CD14-positive monocyte (primary cell): ENCODE measurements at regions of chr3 and their contacts with region 1.

Region 1: GRCh38 chr3:15332405-15333098 is at the start of gene SH3BP5:
- DNase-seq: peak; percentile 65 to 72 (median 70)
- H3K4me3 ChIP-seq: peak within 1 kb of the TSS; percentile 78 to 84 (median 82)
- H3K4me3 Mint-ChIP-seq: peak within 1 kb of the TSS; percentile 97
- H3K27ac ChIP-seq: peak within 1 kb of the TSS; percentile 40 to 86
- H3K27ac Mint-ChIP-seq: peak within 1 kb of the TSS; percentile 79 to 94 (median 89)
- H3K4me1 ChIP-seq: peaks cover 18 to 34% of the 10 kb centered on the region in 2 donors
- H3K4me1 Mint-ChIP-seq: peaks cover 39% of the 10 kb centered on the region
- H3K27me3 ChIP-seq: peaks cover 2 to 3% of the 10 kb centered on the region in 2 donors
- H3K27me3 Mint-ChIP-seq: peaks cover 19 to 24% (median 21%) of the 10 kb centered on the region in 3 donors
- CTCF ChIP-seq: peak; percentile 73
- polyA plus RNA-seq, gene SH3BP5: 10.7 to 29.6 (median 22.8) TPM

Region 2: DNA sequence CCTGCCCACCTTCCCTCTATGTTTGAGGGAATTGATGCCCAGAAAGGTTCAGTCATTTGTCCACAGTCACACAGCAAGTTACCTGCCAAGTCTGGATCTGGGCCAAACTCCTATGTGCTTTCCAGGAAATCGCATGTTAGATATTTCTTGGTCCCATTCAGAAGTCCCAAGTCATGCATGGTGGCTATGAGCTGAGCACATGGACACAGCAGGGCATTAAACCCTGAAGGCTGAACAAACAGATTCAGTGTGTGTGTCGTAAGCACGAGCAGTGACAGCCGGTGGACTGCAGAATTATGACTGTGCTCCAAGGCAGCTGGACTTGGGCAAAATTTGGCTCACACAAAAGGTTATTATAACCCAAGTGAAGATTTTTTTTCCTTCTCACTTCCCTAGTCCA is 941.5 kb before region 1 on chr3:
- intact Hi-C with region 1: no loop called
- DNase-seq: peak; percentile 74 to 80 (median 75)
- H3K4me3 ChIP-seq: no peak overlapping the region
- H3K4me3 Mint-ChIP-seq: no peak overlapping the region
- H3K27ac ChIP-seq: peak overlapping the region; percentile 39 to 71
- H3K27ac Mint-ChIP-seq: peak overlapping the region; percentile 71 to 91 (median 81)
- H3K4me1 ChIP-seq: peaks cover 49 to 54% of the 10 kb centered on the region in 2 donors
- H3K4me1 Mint-ChIP-seq: peaks cover 48% of the 10 kb centered on the region
- H3K27me3 ChIP-seq: no peaks in the 10 kb centered on the region
- H3K27me3 Mint-ChIP-seq: peaks cover 1 to 8% (median 5%) of the 10 kb centered on the region in 3 donors
- CTCF ChIP-seq: no peak

Region 3: GRCh38 chr3:15300323-15301078 is 32.1 kb before region 1 on chr3:
- intact Hi-C with region 1: loop called (anchors 5 kb)
- DNase-seq: peak; percentile 87 to 97 (median 95)
- H3K4me3 ChIP-seq: no peak overlapping the region
- H3K4me3 Mint-ChIP-seq: peak overlapping the region in 1 of 2 donors; percentile 57
- H3K27ac ChIP-seq: peak overlapping the region; percentile 67 to 93
- H3K27ac Mint-ChIP-seq: peak overlapping the region; percentile 91 to 99 (median 97)
- H3K4me1 ChIP-seq: peaks cover 44 to 55% of the 10 kb centered on the region in 2 donors
- H3K4me1 Mint-ChIP-seq: peaks cover 46% of the 10 kb centered on the region
- H3K27me3 ChIP-seq: no peaks in the 10 kb centered on the region
- H3K27me3 Mint-ChIP-seq: peaks cover 0 to 8% (median 8%) of the 10 kb centered on the region in 3 donors
- CTCF ChIP-seq: peak; percentile 5

Region 4: GRCh38 chr3:15316998-15317435 is 15.5 kb before region 1 on chr3:
- intact Hi-C with region 1: loop called in 1 of 2 experiments (anchors 2 kb)
- DNase-seq: no peak
- H3K4me3 ChIP-seq: no peak overlapping the region
- H3K4me3 Mint-ChIP-seq: no peak overlapping the region
- H3K27ac ChIP-seq: no peak overlapping the region
- H3K27ac Mint-ChIP-seq: peak overlapping the region in 6 of 7 donors; percentile 20 to 59 (median 46)
- H3K4me1 ChIP-seq: peaks cover 35 to 51% of the 10 kb centered on the region in 2 donors
- H3K4me1 Mint-ChIP-seq: peaks cover 48% of the 10 kb centered on the region
- H3K27me3 ChIP-seq: no peaks in the 10 kb centered on the region
- H3K27me3 Mint-ChIP-seq: peaks cover 0 to 7% (median 0%) of the 10 kb centered on the region in 3 donors
- CTCF ChIP-seq: no peak

Region 5: GRCh38 chr3:15377961-15378791 is 45.6 kb after region 1 on chr3:
- intact Hi-C with region 1: loop called (anchors 5 kb)
- DNase-seq: peak; percentile 96 to 98 (median 97)
- H3K4me3 ChIP-seq: no peak overlapping the region
- H3K4me3 Mint-ChIP-seq: no peak overlapping the region
- H3K27ac ChIP-seq: peak overlapping the region; percentile 39 to 88
- H3K27ac Mint-ChIP-seq: peak overlapping the region; percentile 85 to 95 (median 90)
- H3K4me1 ChIP-seq: peaks cover 4 to 9% of the 10 kb centered on the region in 2 donors
- H3K4me1 Mint-ChIP-seq: peaks cover 12% of the 10 kb centered on the region
- H3K27me3 ChIP-seq: no peaks in the 10 kb centered on the region
- H3K27me3 Mint-ChIP-seq: peaks cover 0 to 1% (median 0%) of the 10 kb centered on the region in 3 donors
- CTCF ChIP-seq: peak; percentile 85

Region 6: GRCh38 chr3:15404767-15405166 is 72.2 kb after region 1 on chr3:
- intact Hi-C with region 1: no loop called
- DNase-seq: peak in 2 of 3 donors; percentile 44 to 46
- H3K4me3 ChIP-seq: peak overlapping the region in 1 of 3 experiments; percentile 27
- H3K4me3 Mint-ChIP-seq: no peak overlapping the region
- H3K27ac ChIP-seq: peak overlapping the region; percentile 34 to 75
- H3K27ac Mint-ChIP-seq: peak overlapping the region; percentile 63 to 85 (median 75)
- H3K4me1 ChIP-seq: peaks cover 36 to 41% of the 10 kb centered on the region in 2 donors
- H3K4me1 Mint-ChIP-seq: peaks cover 41% of the 10 kb centered on the region
- H3K27me3 ChIP-seq: no peaks in the 10 kb centered on the region
- H3K27me3 Mint-ChIP-seq: peaks cover 0 to 3% (median 3%) of the 10 kb centered on the region in 3 donors
- CTCF ChIP-seq: no peak

Region 7: DNA sequence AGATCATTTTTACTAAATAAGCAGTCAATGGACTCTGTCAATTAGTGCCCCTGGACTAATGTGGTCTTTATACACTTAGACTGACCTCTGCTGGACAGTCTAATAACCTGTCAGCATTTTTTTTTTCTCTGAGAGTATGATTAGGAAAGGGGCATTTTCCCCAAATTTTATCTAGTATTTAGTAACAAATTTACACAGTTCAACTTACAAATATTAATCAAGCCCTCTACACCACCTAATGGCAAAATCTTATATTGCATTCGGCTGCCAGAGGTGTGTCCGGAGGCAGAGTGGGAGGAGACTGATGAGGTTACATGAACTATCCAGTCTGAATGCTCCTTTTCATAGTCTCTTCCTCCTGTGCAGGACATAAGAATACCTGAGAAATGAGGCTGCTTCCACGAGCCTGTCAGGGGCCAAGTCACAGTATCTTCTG is 225.0 kb after region 1 on chr3:
- intact Hi-C with region 1: loop called in 1 of 2 experiments (anchors 5 kb)
- DNase-seq: peak; percentile 64 to 80 (median 68)
- H3K4me3 ChIP-seq: no peak overlapping the region
- H3K4me3 Mint-ChIP-seq: peak overlapping the region in 1 of 2 donors; percentile 30
- H3K27ac ChIP-seq: peak overlapping the region in 1 of 2 donors; percentile 91
- H3K27ac Mint-ChIP-seq: peak overlapping the region; percentile 92 to 98 (median 97)
- H3K4me1 ChIP-seq: peaks cover 30 to 33% of the 10 kb centered on the region in 2 donors
- H3K4me1 Mint-ChIP-seq: peaks cover 29% of the 10 kb centered on the region
- H3K27me3 ChIP-seq: no peaks in the 10 kb centered on the region
- H3K27me3 Mint-ChIP-seq: peaks cover 0 to 2% (median 0%) of the 10 kb centered on the region in 3 donors
- CTCF ChIP-seq: peak; percentile 92